Endothelial cell of umbilical vein (primary cell): ENCODE measurements at regions of chr7 and their contacts with region 1.

Region 1: GRCh38 chr7:80659120-80660055 is 20.9 kb downstream of the CD36 start:
- DNase-seq: peak; percentile 44
- H3K4me3 ChIP-seq: no peak overlapping the region
- H3K27ac ChIP-seq: no peak overlapping the region
- H3K4me1 ChIP-seq: no peaks in the 10 kb centered on the region
- H3K27me3 ChIP-seq: no peaks in the 10 kb centered on the region
- CTCF ChIP-seq: peak; percentile 36 to 45
- POLR2A ChIP-seq: no peak

Region 2: GRCh38 chr7:80428161-80429054 is 231.0 kb before region 1 on chr7:
- CTCF ChIA-PET with region 1: interaction called, 50 read pairs
- POLR2A ChIA-PET with region 1: no interaction called
- dilution Hi-C with region 1: no loop called
- intact Hi-C with region 1: loop called (anchors 1 kb)
- DNase-seq: peak; percentile 63
- H3K4me3 ChIP-seq: no peak overlapping the region
- H3K27ac ChIP-seq: no peak overlapping the region
- H3K4me1 ChIP-seq: no peaks in the 10 kb centered on the region
- H3K27me3 ChIP-seq: no peaks in the 10 kb centered on the region
- CTCF ChIP-seq: peak; percentile 16 to 32
- POLR2A ChIP-seq: no peak

Region 3: GRCh38 chr7:80459776-80460510 is 199.4 kb before region 1 on chr7:
- CTCF ChIA-PET with region 1: interaction called, 10 read pairs
- POLR2A ChIA-PET with region 1: no interaction called
- dilution Hi-C with region 1: no loop called
- intact Hi-C with region 1: no loop called
- DNase-seq: no peak
- H3K4me3 ChIP-seq: no peak overlapping the region
- H3K27ac ChIP-seq: no peak overlapping the region
- H3K4me1 ChIP-seq: no peaks in the 10 kb centered on the region
- H3K27me3 ChIP-seq: no peaks in the 10 kb centered on the region
- CTCF ChIP-seq: no peak
- POLR2A ChIP-seq: no peak

Region 4: GRCh38 chr7:80542421-80542820 is 117.0 kb before region 1 on chr7:
- CTCF ChIA-PET with region 1: no interaction called
- POLR2A ChIA-PET with region 1: no interaction called
- dilution Hi-C with region 1: no loop called
- intact Hi-C with region 1: no loop called
- DNase-seq: peak; percentile 13
- H3K4me3 ChIP-seq: no peak overlapping the region
- H3K27ac ChIP-seq: no peak overlapping the region
- H3K4me1 ChIP-seq: peaks cover 2% of the 10 kb centered on the region
- H3K27me3 ChIP-seq: no peaks in the 10 kb centered on the region
- CTCF ChIP-seq: no peak
- POLR2A ChIP-seq: no peak

Region 5: DNA sequence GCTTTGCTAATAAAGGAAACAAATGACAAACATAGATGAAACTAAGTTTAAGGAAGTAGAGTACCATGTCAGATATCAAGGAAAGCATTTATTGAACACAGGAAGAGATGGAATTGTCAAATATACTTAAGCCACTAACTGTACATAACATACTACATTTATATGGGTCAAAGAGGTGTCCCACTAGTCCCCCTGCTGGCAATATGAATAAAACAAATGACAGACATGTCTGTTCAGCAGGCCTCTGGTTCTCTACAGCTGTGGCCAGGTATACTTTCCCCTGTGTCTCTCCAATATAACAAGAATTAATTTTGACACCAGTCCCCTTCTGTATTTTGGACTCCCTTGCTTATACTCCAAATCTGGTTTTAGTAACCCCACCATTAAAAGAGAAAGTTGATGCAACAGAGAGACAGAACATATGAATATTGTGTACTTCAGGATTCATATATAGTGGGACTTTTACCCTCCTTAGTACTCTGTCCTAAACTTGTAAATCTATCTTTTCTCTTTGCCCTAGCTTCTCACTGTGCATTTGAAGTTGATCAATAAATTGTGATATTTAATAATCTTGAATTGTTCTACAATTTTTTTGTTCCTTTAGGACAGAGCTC is 22.0 kb after region 1 on chr7:
- CTCF ChIA-PET with region 1: interaction called, 11 read pairs
- POLR2A ChIA-PET with region 1: no interaction called
- dilution Hi-C with region 1: no loop called
- intact Hi-C with region 1: no loop called
- DNase-seq: peak; percentile 42
- H3K4me3 ChIP-seq: no peak overlapping the region
- H3K27ac ChIP-seq: no peak overlapping the region
- H3K4me1 ChIP-seq: no peaks in the 10 kb centered on the region
- H3K27me3 ChIP-seq: no peaks in the 10 kb centered on the region
- CTCF ChIP-seq: peak; percentile 18 to 47
- POLR2A ChIP-seq: no peak

Region 6: DNA sequence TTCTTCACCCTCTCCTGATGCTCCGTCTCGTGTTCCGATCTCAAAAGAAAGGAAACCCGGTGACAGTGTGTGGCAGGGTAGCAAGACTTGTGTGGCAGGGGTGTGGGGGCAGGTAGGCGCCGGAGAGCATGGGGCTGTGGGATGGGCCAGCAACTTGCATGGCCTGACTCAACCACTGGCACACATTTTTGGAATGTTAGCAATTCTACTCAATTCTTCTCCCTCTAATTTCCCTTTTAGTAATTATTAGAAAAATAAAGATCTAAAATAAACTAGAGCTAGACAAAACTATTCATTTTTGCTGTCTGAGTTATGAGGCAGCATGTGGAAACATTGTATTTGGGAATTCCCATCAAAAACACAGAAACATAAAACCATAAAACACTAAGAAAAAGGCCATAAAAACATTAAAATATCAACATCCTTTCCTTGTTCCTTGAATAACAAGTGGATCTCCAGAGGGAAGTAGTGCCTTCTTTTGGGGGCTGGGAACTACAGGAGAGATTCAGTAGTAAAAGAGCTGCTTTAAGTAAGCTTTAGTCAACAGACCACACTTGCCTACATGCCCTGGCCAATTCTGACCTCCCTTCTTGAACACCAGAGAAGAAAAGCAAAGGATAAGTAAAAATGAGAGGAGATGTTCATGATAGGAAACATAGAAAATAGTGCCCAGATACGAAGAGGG is 237.7 kb after region 1 on chr7:
- CTCF ChIA-PET with region 1: no interaction called
- POLR2A ChIA-PET with region 1: no interaction called
- dilution Hi-C with region 1: no loop called
- intact Hi-C with region 1: no loop called
- DNase-seq: no peak
- H3K4me3 ChIP-seq: no peak overlapping the region
- H3K27ac ChIP-seq: no peak overlapping the region
- H3K4me1 ChIP-seq: peaks cover 6% of the 10 kb centered on the region
- H3K27me3 ChIP-seq: no peaks in the 10 kb centered on the region
- CTCF ChIP-seq: no peak
- POLR2A ChIP-seq: no peak